ENCODE measurements at regions of chr17 and their contacts with region 1.

Region 1: DNA sequence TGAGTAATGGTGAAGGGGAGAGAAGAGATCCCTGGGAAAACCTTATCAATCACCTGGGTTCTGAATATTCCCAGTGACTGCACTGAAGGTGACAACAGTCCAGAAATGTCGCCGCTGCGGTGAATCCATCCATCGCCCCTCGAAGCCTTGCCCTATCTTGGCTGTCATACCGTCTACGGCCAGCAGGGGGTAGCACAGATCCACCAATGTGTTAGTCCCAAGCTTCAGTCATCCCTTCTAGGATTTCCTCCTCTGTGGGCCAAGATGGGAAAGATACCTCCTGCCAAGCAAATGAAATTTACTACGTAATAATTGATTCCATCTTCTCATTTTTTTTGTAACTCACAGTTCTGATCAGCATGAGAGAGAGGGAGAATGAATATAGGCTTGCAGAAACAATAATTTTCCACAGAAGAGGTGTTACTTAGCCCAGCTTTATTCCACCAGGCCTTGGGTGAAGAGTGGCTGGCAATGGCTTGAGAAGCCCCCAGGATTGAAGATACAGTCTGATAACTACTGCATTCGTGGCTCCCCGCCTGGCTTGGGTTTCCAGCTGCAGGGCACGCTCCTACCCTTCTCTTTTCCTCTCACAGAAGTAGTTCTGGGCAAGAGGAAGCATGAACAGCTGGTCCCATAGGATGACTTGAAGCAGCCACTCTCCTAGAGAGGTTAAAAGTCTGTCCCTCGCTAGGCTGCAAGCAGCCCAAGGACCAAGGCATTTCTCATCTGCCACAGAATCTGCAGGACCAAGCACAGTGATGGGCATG is 2.6 kb upstream of the FMNL1 start:
- DNase-seq: peak; percentile 86

Region 2: DNA sequence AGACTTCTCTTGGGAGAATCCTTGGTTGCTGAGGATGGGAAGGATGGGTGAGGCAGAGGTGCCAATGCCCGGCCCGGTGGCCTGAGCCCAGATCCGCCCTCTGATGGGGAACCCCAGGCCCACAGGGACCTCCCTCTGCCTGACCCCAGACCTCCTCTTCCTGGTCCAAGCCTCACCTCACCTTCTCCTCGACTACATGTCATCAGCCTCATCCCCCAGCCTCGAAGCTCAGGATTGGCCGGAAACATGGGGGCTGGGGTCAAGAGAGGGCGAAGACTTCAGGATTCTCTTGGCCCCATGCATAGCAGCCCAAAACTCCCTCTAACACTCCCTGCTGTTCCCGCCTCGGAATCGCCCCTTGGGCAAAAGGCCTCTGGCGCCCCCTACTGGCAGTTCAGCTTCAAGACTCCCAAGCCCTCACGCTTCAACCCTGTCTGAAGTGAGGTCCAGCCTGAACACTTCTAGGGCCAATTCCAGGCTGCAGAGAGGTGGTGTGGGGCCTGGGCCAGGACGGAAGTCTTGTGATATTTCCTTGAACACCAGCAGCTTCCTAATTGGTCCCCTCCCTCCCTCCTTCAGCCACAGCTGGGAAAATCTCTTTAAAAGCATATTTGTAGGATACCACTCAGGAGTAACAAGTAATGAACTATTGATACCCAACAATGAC is 166.4 kb after region 1 on chr17:
- CTCF ChIA-PET with region 1: interaction called, 16 read pairs
- POLR2A ChIA-PET with region 1: no interaction called
- DNase-seq: peak; percentile 86